Activated CD8-positive, alpha-beta memory T cell treated with anti-CD3 and anti-CD28 coated beads, Interleukin-2, amount 10 ng/mL, durations not matched to agents 7 days and 5 days (primary cell): ENCODE measurements at regions of chr15 and their contacts with region 1.

Region 1: DNA sequence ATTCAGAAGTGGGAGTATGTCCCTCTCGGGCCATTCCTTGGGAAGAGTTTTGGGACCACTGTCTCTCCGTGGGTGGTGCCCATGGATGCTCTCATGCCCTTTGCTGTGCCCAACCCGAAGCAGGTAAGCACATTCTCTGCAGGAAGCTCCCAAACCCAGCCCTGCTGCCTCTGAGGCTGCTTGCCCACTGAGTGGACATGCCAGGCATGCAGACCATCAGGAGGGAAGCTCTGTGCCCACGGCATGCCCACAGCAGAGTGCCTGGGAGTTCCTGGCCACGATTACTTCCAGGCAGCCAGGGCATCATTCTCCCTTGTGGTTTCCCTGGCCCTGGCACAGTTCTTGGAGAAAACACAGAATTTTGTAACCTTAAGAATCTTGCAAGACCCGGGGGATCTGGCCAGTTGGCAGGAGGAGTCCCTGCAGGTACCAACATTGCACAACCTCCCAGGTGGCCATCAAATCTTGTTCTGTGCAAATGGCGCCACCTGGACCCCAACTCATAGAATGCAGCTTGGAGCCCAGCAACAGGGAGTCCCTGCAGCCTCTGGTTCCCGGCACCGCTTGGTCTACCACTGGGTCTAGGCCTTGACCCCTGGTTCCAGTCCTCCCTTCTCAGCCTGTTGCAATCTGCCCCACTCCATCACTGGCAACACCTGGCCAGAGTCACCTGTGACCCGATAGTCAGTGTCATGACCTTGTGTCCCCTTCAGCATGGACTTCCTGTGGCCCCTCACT is 20.4 kb downstream of the FAH start:
- DNase-seq: peak; percentile 83
- ATAC-seq: peak; percentile 89
- H3K4me3 Mint-ChIP-seq: no peak overlapping the region
- H3K27ac Mint-ChIP-seq: peak overlapping the region; percentile 56
- H3K4me1 Mint-ChIP-seq: peaks cover 4% of the 10 kb centered on the region
- H3K27me3 Mint-ChIP-seq: no peaks in the 10 kb centered on the region

Region 2: GRCh38 chr15:80090879-80091503 is 82.2 kb before region 1 on chr15:
- CTCF ChIA-PET with region 1: interaction called, 16 read pairs
- DNase-seq: no peak
- ATAC-seq: no peak
- H3K4me3 Mint-ChIP-seq: no peak overlapping the region
- H3K27ac Mint-ChIP-seq: no peak overlapping the region
- H3K4me1 Mint-ChIP-seq: peaks cover 10% of the 10 kb centered on the region
- H3K27me3 Mint-ChIP-seq: no peaks in the 10 kb centered on the region

Region 3: GRCh38 chr15:80160570-80161156 is 12.5 kb before region 1 on chr15:
- CTCF ChIA-PET with region 1: interaction called, 23 read pairs
- DNase-seq: peak; percentile 86
- ATAC-seq: peak; percentile 93
- H3K4me3 Mint-ChIP-seq: no peak overlapping the region
- H3K27ac Mint-ChIP-seq: peak overlapping the region; percentile 94
- H3K4me1 Mint-ChIP-seq: peaks cover 35% of the 10 kb centered on the region
- H3K27me3 Mint-ChIP-seq: no peaks in the 10 kb centered on the region

Region 4: DNA sequence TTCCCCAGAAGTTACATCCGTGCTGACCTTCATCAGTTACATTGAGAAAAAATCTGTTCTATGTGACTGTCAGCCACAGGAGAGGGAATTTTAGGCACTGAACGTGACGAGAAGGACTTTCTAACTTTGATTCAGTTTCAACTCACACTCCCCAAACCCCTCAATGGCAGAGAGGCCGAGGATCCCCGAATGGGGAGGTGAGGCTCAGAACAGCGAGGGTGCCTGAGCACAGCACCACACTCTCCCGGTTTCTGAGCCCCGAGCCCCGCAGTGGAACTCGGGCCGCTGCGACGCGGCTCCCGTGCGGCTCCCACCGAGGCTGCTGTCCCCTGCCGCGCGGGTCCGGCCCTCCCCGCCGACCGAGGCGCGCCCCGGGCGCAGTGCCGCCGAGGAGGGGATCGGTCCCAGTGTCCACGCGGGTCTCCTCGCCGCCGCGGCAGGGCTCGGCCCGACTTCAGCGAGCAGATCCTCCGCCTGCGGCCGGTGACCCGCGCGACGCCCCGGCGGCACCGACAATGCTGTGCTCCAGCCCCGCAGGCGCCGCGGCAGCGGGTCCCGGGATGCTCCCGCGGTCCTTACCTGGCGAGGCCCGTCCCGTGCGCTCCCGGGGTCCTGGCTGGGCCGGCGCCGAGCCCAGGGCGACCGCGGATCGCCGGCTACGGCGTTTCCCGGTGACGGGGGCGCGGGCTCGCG is 78.4 kb after region 1 on chr15:
- CTCF ChIA-PET with region 1: no interaction called
- DNase-seq: no peak
- ATAC-seq: no peak
- H3K4me3 Mint-ChIP-seq: no peak overlapping the region
- H3K27ac Mint-ChIP-seq: no peak overlapping the region
- H3K4me1 Mint-ChIP-seq: peaks cover 5% of the 10 kb centered on the region
- H3K27me3 Mint-ChIP-seq: peaks cover 76% of the 10 kb centered on the region

Region 5: DNA sequence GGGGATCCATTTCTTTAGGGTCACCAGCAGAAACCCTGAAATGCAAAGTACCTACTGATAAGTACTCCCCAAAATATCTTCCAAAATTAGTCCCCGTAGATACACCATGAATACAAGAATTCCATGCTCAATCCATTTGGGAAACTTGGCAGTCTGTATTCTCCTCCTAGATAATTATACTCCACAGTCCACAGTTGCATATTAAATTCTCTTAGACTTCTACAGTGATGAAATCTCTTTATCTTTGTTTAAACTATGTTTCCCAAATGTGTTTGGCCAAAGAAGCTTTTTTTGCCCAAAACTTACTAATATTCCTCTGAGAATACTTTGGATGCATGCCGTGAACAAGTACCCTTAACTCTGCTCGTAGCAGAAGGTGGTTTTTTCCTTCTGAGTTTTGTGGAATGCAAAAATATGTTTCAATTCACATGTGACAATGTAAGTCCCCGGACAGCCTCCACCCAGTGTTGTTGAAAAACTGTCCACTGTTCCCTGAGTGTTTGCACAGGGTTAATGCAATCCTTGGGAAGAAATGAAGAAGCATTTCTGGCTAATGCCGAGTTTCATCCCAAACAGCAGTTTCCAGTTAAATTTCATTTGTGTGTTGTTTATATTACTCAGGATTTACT is 357.7 kb after region 1 on chr15:
- CTCF ChIA-PET with region 1: no interaction called
- DNase-seq: no peak
- ATAC-seq: no peak
- H3K4me3 Mint-ChIP-seq: no peak overlapping the region
- H3K27ac Mint-ChIP-seq: no peak overlapping the region
- H3K4me1 Mint-ChIP-seq: no peaks in the 10 kb centered on the region
- H3K27me3 Mint-ChIP-seq: peaks cover 28% of the 10 kb centered on the region